CD8-positive, alpha-beta memory T cell (primary cell): ENCODE measurements at regions of chr16 and their contacts with region 1.

Region 1: DNA sequence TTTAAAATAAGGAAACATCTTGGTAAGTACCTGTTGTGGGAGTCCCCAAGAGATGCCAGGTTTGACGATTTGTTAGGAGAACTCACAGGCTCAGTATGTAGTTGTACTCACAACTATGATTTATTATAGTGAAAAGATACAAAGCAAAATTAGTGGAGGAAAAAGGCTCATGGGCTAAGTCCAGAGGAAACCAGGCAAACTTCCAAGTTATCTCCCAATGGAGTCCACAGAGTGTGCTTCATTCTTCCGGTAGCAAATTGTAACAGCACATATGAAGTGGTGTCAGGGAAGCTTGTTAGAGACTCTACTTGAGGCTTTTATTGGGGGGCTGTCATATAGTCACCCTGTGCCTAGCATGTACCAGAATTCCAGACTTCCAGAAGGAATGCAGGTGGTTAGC is 2.3 kb downstream of the DDX19A start:
- DNase-seq: no peak
- H3K4me3 ChIP-seq: no peak overlapping the region
- H3K4me3 Mint-ChIP-seq: peak overlapping the region in 2 of 7 donors; percentile 5 to 25
- H3K27ac ChIP-seq: no peak overlapping the region
- H3K27ac Mint-ChIP-seq: peak overlapping the region in 7 of 8 donors; percentile 4 to 99 (median 65)
- H3K4me1 ChIP-seq: peaks cover 19% of the 10 kb centered on the region
- H3K4me1 Mint-ChIP-seq: peaks cover 25 to 46% (median 35%) of the 10 kb centered on the region in 3 donors
- H3K27me3 ChIP-seq: no peaks in the 10 kb centered on the region
- H3K27me3 Mint-ChIP-seq: peaks cover 0 to 4% of the 10 kb centered on the region in 2 donors

Region 2: DNA sequence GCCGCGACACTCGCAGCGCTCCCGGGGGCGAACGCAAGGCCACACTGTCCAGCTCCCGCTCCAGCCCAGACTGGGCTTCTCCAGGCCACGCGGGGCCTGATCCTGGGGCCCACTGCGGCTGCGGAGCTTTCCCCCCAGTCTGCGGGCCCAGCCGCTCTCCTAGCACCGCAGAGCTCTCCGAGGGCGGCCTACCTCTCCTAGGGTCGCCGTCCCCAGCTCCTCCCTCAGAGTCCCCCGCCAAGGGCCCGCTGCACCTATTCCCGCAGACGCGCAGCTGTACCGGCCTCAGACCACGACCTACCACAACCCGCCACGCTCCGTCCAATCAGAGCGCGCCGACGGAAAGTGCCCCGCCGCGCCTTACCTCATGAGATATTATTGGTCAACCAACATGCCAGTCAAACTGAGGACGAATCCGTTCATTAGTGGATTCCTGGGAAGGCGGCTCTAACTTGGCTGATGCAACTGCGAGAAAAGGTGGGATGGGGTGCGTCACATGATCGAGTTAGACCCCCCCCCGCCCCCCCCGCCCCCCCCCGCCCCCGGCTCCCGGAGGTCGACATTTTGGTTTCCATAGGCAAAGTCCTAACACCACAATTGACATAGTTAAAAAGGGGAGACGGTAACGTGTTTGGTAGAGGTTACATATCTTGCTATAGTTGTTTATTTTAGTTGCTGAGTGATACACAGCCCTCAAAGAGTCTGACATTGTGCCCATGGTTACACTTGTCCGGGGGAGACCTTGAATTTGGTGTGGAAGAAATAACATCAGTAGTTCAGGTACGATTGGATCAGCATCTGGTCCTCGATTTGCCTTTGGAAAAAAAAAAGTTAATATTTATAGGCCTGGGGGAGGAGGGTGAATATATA is 59.5 kb before region 1 on chr16 and contains the start of gene AARS1:
- CTCF ChIA-PET with region 1: interaction called, 5 read pairs
- POLR2A ChIA-PET with region 1: interaction called, 23 read pairs
- DNase-seq: peak; percentile 92 to 97 (median 96)
- H3K4me3 ChIP-seq: peak within 1 kb of the TSS; percentile 67
- H3K4me3 Mint-ChIP-seq: peak within 1 kb of the TSS; percentile 90 to 98 (median 97)
- H3K27ac ChIP-seq: peak within 1 kb of the TSS; percentile 93
- H3K27ac Mint-ChIP-seq: peak within 1 kb of the TSS; percentile 67 to 100 (median 96)
- H3K4me1 ChIP-seq: peaks cover 8% of the 10 kb centered on the region
- H3K4me1 Mint-ChIP-seq: peaks cover 12 to 25% (median 24%) of the 10 kb centered on the region in 3 donors
- H3K27me3 ChIP-seq: no peaks in the 10 kb centered on the region
- H3K27me3 Mint-ChIP-seq: peaks cover 0 to 2% of the 10 kb centered on the region in 2 donors
- total RNA-seq, gene AARS1: 135 to 136 TPM

Region 3: DNA sequence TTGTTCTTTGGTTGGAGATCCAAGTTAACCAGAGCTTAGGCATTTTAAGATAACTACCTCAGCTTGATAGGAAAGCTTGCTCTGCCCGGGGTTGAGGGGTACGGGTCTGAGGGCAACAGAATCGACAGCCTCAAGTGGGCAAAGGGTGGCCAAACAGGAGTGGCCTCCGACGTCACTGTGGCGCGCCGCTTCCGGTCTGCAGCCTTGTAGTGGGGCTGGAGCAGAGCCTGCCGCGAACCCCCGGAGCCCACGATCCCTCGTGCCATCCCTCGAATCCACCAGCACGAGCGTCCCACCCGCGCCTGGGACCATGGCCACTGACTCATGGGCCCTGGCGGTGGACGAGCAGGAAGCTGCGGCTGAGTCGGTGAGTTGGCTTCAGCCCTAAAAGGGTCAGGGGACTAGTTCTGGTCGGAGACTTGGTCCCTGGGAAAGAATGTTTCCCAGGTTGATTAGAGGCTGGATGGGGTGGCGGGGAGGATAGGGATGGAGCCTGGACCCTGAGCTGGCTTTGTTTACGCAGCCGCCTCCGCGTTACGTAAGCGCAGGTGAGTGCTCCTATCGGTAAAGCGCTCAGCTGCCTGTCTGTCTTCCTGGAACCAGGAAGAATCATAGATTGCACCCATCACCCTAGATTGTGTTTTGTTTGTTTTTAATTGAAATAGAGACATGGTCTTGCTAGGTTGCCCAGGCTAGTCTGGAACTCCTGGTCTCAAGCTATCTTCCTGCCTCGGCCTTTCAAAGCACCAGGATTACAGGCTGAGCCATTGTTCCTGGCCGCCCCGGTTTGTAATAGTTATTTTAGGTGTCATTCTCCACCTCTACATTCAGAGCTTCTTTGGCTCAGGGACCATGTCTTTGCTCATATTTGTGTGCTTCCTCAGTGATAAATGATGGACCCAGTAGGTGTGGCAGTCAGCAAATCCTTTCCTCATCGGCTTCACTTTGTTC is 49.7 kb before region 1 on chr16 and contains the start of gene DDX19B:
- CTCF ChIA-PET with region 1: interaction called, 10 read pairs
- POLR2A ChIA-PET with region 1: interaction called, 18 read pairs
- DNase-seq: peak; percentile 32 to 72 (median 56)
- H3K4me3 ChIP-seq: peak within 1 kb of the TSS; percentile 88
- H3K4me3 Mint-ChIP-seq: peak within 1 kb of the TSS; percentile 89 to 98 (median 97)
- H3K27ac ChIP-seq: peak within 1 kb of the TSS; percentile 90
- H3K27ac Mint-ChIP-seq: peak within 1 kb of the TSS; percentile 87 to 99 (median 98)
- H3K4me1 ChIP-seq: peaks cover 19% of the 10 kb centered on the region
- H3K4me1 Mint-ChIP-seq: peaks cover 38 to 49% (median 47%) of the 10 kb centered on the region in 3 donors
- H3K27me3 ChIP-seq: no peaks in the 10 kb centered on the region
- H3K27me3 Mint-ChIP-seq: no peaks in the 10 kb centered on the region
- total RNA-seq, gene DDX19B: 36.0 to 38.8 TPM

Region 4: GRCh38 chr16:70324998-70325747 is 23.8 kb before region 1 on chr16:
- CTCF ChIA-PET with region 1: no interaction called
- POLR2A ChIA-PET with region 1: no interaction called
- DNase-seq: no peak
- H3K4me3 ChIP-seq: no peak overlapping the region
- H3K4me3 Mint-ChIP-seq: no peak overlapping the region
- H3K27ac ChIP-seq: no peak overlapping the region
- H3K27ac Mint-ChIP-seq: peak overlapping the region in 1 of 8 donors; percentile 17
- H3K4me1 ChIP-seq: no peaks in the 10 kb centered on the region
- H3K4me1 Mint-ChIP-seq: no peaks in the 10 kb centered on the region
- H3K27me3 ChIP-seq: no peaks in the 10 kb centered on the region
- H3K27me3 Mint-ChIP-seq: no peaks in the 10 kb centered on the region

Region 5: GRCh38 chr16:70380861-70381603 is 32.0 kb after region 1 on chr16:
- CTCF ChIA-PET with region 1: interaction called, 3 read pairs
- POLR2A ChIA-PET with region 1: interaction called, 24 read pairs
- DNase-seq: peak; percentile 94 to 97 (median 95)
- H3K4me3 ChIP-seq: peak overlapping the region; percentile 66
- H3K4me3 Mint-ChIP-seq: peak overlapping the region; percentile 92 to 99 (median 96)
- H3K27ac ChIP-seq: peak overlapping the region; percentile 25
- H3K27ac Mint-ChIP-seq: peak overlapping the region; percentile 85 to 98 (median 92)
- H3K4me1 ChIP-seq: peaks cover 16% of the 10 kb centered on the region
- H3K4me1 Mint-ChIP-seq: peaks cover 18 to 24% (median 19%) of the 10 kb centered on the region in 3 donors
- H3K27me3 ChIP-seq: no peaks in the 10 kb centered on the region
- H3K27me3 Mint-ChIP-seq: no peaks in the 10 kb centered on the region

Region 6: DNA sequence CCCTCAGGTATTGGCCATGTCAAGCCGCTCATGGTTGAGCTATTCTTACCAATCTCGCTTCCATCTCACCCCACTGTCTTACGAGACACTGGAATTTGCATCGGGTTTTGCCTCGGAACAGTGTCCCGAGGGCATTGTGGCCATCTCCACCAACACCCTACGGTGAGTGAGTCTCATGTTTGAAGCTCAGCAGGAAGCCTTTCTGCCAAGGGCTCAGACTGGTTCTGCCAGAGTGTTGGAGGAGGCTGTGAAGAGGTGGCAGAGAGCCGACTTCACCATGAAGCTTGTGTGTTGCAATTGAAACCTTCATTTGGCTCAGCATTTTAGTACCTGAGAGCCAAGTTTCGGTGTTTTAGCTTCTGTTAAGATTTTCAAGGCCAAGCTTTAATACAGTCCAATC is 212.6 kb after region 1 on chr16:
- CTCF ChIA-PET with region 1: no interaction called
- POLR2A ChIA-PET with region 1: interaction called, 13 read pairs
- DNase-seq: no peak
- H3K4me3 ChIP-seq: no peak overlapping the region
- H3K4me3 Mint-ChIP-seq: no peak overlapping the region
- H3K27ac ChIP-seq: no peak overlapping the region
- H3K27ac Mint-ChIP-seq: peak overlapping the region in 1 of 8 donors; percentile 69
- H3K4me1 ChIP-seq: no peaks in the 10 kb centered on the region
- H3K4me1 Mint-ChIP-seq: no peaks in the 10 kb centered on the region
- H3K27me3 ChIP-seq: no peaks in the 10 kb centered on the region
- H3K27me3 Mint-ChIP-seq: no peaks in the 10 kb centered on the region